HEK293 (cell line): ENCODE measurements at regions of chr9 and their contacts with region 1.

Region 1: GRCh38 chr9:95249986-95250385 is 67.5 kb downstream of the FANCC start:
- H3K4me3 ChIP-seq: no peak overlapping the region
- H3K27ac ChIP-seq: no peak overlapping the region
- H3K4me1 ChIP-seq: peaks cover 4% of the 10 kb centered on the region; the same call in 1 of the 2 replicates
- CTCF ChIP-seq: no peak

Region 2: DNA sequence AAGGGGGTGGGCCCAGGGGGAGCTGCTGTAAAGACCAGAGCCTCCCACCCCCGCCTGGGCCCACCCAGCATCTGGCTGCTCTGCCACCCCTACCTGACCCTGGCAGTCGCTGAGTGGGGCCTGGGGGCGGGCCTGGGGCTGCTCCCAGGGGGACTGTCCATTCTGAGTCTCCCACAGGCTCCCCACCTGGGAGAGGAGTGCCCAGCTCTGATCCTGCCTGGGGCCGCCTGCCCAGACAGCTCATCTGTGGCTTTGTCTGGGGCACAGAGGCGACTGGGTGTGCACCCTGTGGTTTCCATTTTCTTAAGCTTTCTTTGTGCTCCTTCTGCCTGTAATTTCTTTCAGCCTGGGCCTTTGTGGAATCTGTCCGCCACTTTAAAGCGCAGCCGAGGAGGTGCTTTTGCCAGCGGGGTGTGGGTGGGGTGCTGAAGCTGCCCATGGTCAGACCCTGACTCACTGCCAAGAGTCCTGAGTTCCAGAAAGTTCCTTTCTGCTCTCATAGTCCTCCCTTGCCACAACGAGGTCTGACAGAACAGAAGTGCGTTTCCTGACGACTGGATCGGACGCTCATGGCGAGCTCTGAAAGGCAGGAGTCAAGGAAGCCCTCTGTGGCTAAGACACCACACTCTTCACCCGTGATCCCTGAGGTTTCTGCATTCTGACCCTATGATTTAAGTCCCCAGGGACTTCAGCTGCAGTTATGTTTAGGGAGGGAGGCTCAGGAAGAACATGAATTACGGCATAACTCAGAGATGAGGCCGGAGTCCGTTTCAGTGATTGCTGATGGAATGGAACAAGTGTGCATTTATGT is 157.5 kb before region 1 on chr9:
- CTCF ChIA-PET with region 1: no interaction called
- POLR2A ChIA-PET with region 1: no interaction called
- H3K4me3 ChIP-seq: no peak overlapping the region
- H3K27ac ChIP-seq: no peak overlapping the region
- H3K4me1 ChIP-seq: no peaks in the 10 kb centered on the region
- CTCF ChIP-seq: no peak

Region 3: DNA sequence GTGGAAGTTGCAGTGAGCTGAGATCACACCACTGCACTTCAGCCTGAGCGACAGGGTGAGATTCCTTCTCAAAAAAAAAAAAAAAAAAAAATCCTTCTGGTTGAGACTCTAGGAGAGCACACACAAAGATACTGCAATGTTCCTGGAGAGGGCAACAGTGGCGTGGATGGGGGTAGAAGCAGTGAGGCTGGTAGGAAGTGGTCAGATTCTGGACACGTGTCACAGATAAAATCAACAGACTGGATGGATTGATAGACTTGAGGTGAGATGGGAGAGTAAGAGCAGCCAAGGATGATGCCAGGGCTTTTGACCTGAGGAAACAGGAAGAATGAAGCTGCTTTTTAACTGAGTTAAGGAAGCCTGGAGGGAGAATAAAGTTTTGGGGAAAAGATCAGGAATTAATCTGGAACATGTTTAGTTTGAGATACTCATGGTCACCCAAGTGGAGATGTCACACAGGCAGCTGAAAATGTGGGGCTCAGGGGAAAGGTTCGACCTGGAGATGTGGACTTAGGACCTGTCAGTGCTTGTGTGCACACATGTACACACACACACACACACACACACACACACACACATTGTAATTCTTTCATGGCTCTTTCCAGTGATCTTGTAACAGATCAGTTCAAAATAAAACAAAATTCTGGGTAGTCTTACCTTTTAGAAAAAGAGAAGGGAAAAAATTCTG is 20.6 kb before region 1 on chr9:
- CTCF ChIA-PET with region 1: interaction called, 11 read pairs
- POLR2A ChIA-PET with region 1: no interaction called
- H3K4me3 ChIP-seq: no peak overlapping the region
- H3K27ac ChIP-seq: no peak overlapping the region
- H3K4me1 ChIP-seq: no peaks in the 10 kb centered on the region
- CTCF ChIP-seq: no peak